HCT116 (cell line): ENCODE measurements at regions of chr1 and their contacts with region 1.

Region 1: GRCh38 chr1:91007827-91008226 is 14.0 kb downstream of the ZNF644 start:
- DNase-seq: no peak
- ATAC-seq: no peak
- H3K4me3 ChIP-seq: no peak overlapping the region
- H3K27ac ChIP-seq: no peak overlapping the region
- H3K4me1 ChIP-seq: no peaks in the 10 kb centered on the region
- H3K27me3 ChIP-seq: no peaks in the 10 kb centered on the region
- CTCF ChIP-seq: no peak
- POLR2A ChIP-seq: no peak
- RAD21 ChIP-seq: no peak

Region 2: GRCh38 chr1:89706700-89707012 is 1301.2 kb before region 1 on chr1:
- CTCF ChIA-PET with region 1: no interaction called
- POLR2A ChIA-PET with region 1: no interaction called
- RAD21 ChIA-PET with region 1: no interaction called
- intact Hi-C with region 1: no loop called
- DNase-seq: no peak
- ATAC-seq: no peak
- H3K4me3 ChIP-seq: no peak overlapping the region
- H3K27ac ChIP-seq: no peak overlapping the region
- H3K4me1 ChIP-seq: no peaks in the 10 kb centered on the region
- H3K27me3 ChIP-seq: no peaks in the 10 kb centered on the region
- CTCF ChIP-seq: no peak
- POLR2A ChIP-seq: no peak
- RAD21 ChIP-seq: no peak

Region 3: GRCh38 chr1:91021686-91022517 is 14.1 kb after region 1 on chr1 and contains the start of gene ZNF644:
- CTCF ChIA-PET with region 1: interaction called, 10 read pairs
- POLR2A ChIA-PET with region 1: interaction called, 6 read pairs
- RAD21 ChIA-PET with region 1: no interaction called
- intact Hi-C with region 1: no loop called
- DNase-seq: peak; percentile 83
- ATAC-seq: peak; percentile 86
- H3K4me3 ChIP-seq: peak within 1 kb of the TSS; percentile 51 to 77
- H3K27ac ChIP-seq: peak within 1 kb of the TSS; percentile 96
- H3K4me1 ChIP-seq: peaks cover 17 to 45% of the 10 kb centered on the region in 2 experiments
- H3K27me3 ChIP-seq: no peaks in the 10 kb centered on the region
- CTCF ChIP-seq: no peak
- POLR2A ChIP-seq: peak; percentile 75
- RAD21 ChIP-seq: no peak
- total RNA-seq, gene ZNF644: 55.9 TPM